ENCODE measurements at regions of chr1 and their contacts with region 1.

Region 1: DNA sequence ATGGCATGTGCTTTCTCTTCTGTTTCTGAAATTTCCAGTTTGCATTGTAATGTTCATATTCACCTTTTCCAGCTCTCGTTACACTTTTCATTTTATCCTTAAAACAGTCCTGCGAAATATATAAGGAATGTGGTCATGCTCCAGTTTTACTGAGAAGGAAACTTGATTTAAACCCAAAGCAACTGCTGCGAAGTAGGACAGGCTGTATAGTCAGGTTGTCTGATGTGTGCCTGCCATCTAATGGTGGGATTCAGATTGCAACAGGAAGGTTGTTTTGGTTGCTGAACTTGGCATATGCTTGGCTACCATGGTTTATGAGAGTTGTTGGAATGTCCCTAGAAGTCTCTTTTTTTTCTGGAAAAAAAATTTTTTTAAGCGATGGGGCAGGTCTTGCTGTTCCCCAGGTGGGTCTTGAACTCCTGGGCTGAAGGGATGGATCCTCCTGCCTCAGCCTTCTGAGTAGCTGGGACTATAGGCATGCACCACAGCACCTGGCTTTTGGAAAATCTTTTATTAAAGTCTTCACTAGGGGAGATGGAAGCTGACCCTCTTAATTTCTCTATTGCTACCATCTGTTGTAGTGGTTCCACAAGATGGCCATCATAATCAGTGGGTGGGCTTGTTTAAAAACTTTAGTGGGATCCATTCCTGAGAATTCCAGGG is 86.9 kb downstream of the UCK2 start:
- DNase-seq: peak; percentile 16 to 86 (median 55)
- ATAC-seq: peak; percentile 85 to 93 (median 88)
- H3K4me3 ChIP-seq: no peak overlapping the region
- H3K4me3 Mint-ChIP-seq: no peak overlapping the region
- H3K27ac ChIP-seq: no peak overlapping the region
- H3K27ac Mint-ChIP-seq: no peak overlapping the region
- H3K4me1 ChIP-seq: no peaks in the 10 kb centered on the region
- H3K4me1 Mint-ChIP-seq: peaks cover 0 to 4% (median 2%) of the 10 kb centered on the region in 3 donors
- H3K27me3 ChIP-seq: no peaks in the 10 kb centered on the region
- H3K27me3 Mint-ChIP-seq: no peaks in the 10 kb centered on the region

Region 2: DNA sequence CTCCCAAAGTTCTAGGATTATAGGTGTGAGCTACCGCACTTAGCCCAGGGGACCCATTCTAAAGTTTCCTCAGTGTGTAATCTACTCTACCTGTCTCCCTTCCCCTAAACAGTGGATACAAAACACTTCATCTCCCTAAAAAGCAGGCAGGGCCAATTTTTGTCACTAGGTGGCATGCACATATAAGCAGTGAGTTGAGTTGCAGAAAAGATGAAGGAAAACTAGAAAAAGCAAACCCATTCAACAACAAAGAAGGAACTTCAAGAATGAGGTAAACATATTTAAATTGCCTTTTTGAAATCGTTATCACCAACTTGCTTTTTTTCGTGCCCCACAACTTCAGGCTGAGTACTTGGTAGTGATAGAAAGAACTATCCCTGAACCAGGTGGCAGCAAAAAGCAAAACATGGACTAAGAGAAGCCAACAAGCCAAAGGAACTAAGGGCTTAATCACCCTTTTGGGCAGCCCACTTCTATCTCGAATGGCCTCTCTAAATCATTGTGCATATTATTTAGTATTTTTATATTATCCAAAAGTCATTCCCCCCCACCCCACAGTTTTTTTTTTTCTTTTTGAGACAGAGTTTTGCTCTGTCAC is 196.2 kb before region 1 on chr1:
- CTCF ChIA-PET with region 1: interaction called, 3 to 14 read pairs
- POLR2A ChIA-PET with region 1: no interaction called
- DNase-seq: peak in 23 of 35 experiments; percentile 2 to 53 (median 13)
- ATAC-seq: peak in 2 of 4 experiments; percentile 35 to 42
- H3K4me3 ChIP-seq: no peak overlapping the region
- H3K4me3 Mint-ChIP-seq: no peak overlapping the region
- H3K27ac ChIP-seq: no peak overlapping the region
- H3K27ac Mint-ChIP-seq: no peak overlapping the region
- H3K4me1 ChIP-seq: no peaks in the 10 kb centered on the region
- H3K4me1 Mint-ChIP-seq: no peaks in the 10 kb centered on the region
- H3K27me3 ChIP-seq: no peaks in the 10 kb centered on the region
- H3K27me3 Mint-ChIP-seq: no peaks in the 10 kb centered on the region